ENCODE measurements at regions of chr1 and their contacts with region 1.

Region 1: DNA sequence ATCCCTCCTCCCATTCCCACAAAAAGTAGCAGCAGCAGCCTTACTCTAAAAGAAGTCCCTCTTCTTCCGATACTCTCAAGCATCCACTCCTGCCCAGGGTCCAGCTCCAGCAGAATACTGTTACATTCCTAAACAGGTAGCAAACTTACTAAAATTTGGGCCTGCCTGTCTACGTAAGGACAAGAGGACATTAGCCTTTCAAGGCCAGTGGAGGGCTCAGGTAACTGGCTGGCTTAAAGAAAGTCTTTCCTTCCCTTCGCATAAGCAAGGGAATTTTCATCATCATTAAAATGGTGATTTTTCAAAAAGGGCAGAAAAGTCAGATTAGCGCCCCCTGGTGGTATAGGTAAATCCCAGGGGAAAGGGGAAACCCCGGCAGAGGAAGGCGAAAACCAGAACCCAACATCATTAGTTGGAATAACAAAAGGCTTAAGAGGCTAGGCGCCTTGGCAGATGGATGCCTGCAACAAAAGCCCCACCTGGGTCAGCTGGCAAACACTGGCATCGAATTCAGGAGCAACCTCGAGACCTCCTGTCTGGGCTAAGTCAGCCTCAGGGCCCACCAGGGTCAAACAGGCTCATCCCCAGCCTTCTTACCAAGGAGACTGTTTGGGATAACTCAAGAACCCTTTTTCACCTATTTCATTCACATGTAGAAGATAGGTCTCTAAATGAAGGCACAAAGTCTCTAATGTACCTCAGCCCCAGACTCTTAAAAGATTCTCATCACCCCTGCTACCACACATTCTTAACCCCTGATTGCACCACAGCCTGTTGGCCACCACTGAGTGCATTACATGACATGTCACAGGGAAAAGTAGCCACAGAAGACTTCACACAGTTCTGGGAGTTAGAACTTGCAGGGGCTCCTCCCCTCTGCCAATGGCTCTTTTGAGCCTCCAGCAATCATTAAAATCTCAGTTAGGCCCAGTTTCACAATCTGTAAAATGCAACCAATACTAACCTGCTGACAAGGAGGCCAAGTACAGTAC is 36.7 kb downstream of the ERI3 start:
- DNase-seq: peak; percentile 75
- H3K4me3 Mint-ChIP-seq: no peak overlapping the region
- H3K27ac Mint-ChIP-seq: peak overlapping the region; percentile 34
- H3K4me1 Mint-ChIP-seq: peaks cover 11% of the 10 kb centered on the region
- H3K27me3 Mint-ChIP-seq: no peaks in the 10 kb centered on the region

Region 2: GRCh38 chr1:44237721-44238457 is 80.5 kb before region 1 on chr1:
- CTCF ChIA-PET with region 1: interaction called, 3 read pairs
- intact Hi-C with region 1: loop called (anchors 5 kb)
- DNase-seq: peak; percentile 62
- H3K4me3 Mint-ChIP-seq: no peak overlapping the region
- H3K27ac Mint-ChIP-seq: no peak overlapping the region
- H3K4me1 Mint-ChIP-seq: peaks cover 6% of the 10 kb centered on the region
- H3K27me3 Mint-ChIP-seq: no peaks in the 10 kb centered on the region

Region 3: DNA sequence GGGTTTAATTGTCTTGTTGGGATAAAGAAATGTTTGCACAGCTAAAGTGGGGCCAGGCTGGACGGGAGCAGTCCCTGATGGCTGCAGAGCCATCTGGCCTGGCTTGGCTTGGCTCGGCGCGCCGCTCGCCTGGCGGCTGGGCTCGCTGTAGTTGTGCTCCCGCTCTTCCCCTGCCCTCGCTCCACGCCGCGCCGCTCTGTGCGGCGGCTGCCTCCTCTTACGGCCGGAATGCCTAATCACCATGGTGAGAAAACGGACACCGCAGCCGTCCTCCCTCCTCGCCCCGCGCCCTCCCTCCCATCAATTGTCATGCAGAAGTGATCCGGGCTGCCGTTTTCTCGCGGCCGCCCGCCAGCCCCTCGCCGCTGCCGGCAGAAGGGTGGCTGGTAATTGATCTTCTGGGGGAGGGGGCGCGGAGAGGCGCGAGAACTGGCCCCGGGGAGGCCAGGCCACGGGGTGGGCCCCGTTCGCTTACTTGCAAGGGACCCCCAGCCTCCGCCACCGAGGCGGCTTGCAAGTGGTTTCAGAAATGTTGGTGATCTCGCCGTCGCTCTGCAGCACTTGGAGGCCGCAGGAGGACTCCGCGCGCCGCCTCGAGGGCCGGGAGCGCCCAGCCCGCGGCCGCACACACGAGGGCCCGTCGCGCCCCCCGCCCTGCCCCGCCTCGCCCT is 99.1 kb after region 1 on chr1:
- CTCF ChIA-PET with region 1: no interaction called
- intact Hi-C with region 1: no loop called
- DNase-seq: peak; percentile 13
- H3K4me3 Mint-ChIP-seq: peak overlapping the region; percentile 13
- H3K27ac Mint-ChIP-seq: no peak overlapping the region
- H3K4me1 Mint-ChIP-seq: peaks cover 6% of the 10 kb centered on the region
- H3K27me3 Mint-ChIP-seq: peaks cover 46% of the 10 kb centered on the region

Measured in activated naive CD4-positive, alpha-beta T cell treated with anti-CD3 and anti-CD28 coated beads for 36 hours (primary cell).